Sciatic nerve (tissue), 2 donors: ENCODE measurements at regions of chr7 and their contacts with region 1.

Region 1: DNA sequence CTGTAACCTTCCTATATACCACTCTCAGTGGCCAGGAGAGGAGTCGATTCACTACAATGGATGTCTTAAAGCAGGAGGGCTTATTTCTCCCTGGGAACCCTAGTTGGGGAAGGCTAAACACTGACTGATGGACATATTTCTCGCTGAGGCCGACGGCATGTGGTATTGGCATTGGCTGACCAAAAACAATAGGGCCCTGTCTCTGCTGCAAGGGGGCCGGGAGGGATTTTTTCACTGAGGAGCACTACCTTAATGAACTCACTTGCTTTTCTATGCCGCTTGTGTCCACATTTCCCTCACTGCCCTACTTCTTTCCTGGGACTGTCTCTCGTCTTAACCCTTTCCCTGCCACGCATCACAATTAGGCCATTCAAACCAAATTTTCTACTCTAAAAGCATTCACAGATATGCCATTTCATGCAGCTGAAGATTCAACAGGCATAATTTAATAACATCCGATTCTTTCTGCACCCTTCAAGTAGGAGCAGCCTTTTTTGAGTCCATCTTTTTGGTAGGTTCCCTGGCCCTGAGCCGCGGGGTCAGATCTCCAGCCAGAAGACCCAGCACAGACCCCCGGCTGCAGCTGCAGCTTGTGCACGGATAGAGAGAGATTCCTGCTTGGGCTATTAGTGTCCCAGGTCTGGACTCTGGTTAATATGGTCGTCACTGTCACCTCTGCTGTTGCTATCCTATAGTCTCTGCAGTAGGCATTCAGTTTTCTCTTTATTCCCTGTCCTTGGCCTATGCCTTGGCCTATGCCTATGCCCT is 118.7 kb downstream of the HIPK2 start:
- DNase-seq: no peak
- ATAC-seq: peak; percentile 25

Region 2: GRCh38 chr7:140463111-140463510 is 804.0 kb after region 1 on chr7:
- intact Hi-C with region 1: loop called (anchors 5 kb)
- DNase-seq: no peak
- ATAC-seq: no peak

Region 3: GRCh38 chr7:140773104-140773503 is 1114.0 kb after region 1 on chr7:
- intact Hi-C with region 1: no loop called
- DNase-seq: no peak
- ATAC-seq: no peak